GM12878 (cell line): ENCODE measurements at regions of chr9 and their contacts with region 1.

Region 1: GRCh38 chr9:95127249-95128176 is 190.0 kb downstream of the FANCC start:
- DNase-seq: no peak
- ATAC-seq: peak; percentile 97
- H3K4me3 ChIP-seq: no peak overlapping the region
- H3K27ac ChIP-seq: no peak overlapping the region
- H3K4me1 ChIP-seq: no peaks in the 10 kb centered on the region
- H3K27me3 ChIP-seq: no peaks in the 10 kb centered on the region
- CTCF ChIP-seq: peak; percentile 91 to 99 (median 96)
- EP300 ChIP-seq: no peak
- POLR2A ChIP-seq: no peak
- RAD21 ChIP-seq: peak; percentile 86

Region 2: DNA sequence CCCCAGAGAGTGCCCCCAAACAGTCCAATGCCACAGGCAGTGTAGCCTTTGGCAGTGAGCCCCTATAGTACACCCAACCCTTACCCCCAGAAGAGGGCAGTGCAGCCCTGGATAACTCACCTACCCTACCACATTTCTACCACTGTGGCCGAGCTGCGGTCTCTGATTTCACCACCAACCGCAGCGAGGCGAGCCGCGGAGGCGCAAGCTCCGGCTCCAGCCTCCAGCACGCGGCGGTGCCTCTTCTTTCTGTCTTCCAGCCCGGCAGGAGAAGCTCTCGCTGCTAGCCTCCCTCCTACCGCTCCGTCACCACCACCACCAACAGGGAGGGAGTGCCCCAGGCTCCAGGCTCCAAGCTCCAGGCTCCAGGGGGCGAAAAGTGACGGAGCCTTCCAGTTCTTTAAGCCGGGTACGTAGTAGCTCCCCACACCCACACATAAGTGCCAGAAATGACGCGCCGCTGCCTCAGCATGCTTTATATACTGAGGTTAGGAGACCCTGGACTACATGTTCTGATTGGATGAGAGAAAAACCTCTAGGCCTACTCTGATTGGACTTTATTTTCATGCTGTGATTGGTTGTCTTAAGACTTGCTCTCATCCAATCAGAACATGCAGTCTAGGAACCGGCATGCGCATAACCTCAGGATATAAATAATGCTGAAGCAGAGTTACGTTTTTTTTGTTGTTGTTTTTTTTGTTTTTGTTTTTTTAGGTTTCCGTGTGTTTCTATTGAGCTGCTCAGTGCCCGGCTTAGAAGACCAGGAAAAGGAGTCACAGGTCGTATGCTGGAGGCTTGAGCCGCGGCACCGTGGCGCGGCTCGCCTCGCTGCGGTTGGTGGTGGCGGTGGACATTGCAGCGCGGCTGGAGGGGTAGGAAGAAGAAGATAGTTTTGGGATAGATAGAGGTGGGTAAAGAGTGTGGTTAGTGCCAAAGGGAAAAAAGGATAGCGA is 572.8 kb before region 1 on chr9 and contains the start of gene PCAT7:
- CTCF ChIA-PET with region 1: no interaction called
- POLR2A ChIA-PET with region 1: no interaction called
- RAD21 ChIA-PET with region 1: interaction called, 3 read pairs
- SMC1A ChIA-PET with region 1: no interaction called
- in situ Hi-C with region 1: no loop called
- intact Hi-C with region 1: loop called (anchors 10 kb)
- DNase-seq: peak; percentile 12
- ATAC-seq: peak; percentile 100
- H3K4me3 ChIP-seq: no peak within 1 kb of the TSS
- H3K27ac ChIP-seq: no peak within 1 kb of the TSS
- H3K4me1 ChIP-seq: no peaks in the 10 kb centered on the region
- H3K27me3 ChIP-seq: no peaks in the 10 kb centered on the region; a peak in 1 of 4 replicates
- CTCF ChIP-seq: peak; percentile 28 to 54 (median 52); a peak in 4 of 6 replicates
- EP300 ChIP-seq: no peak
- POLR2A ChIP-seq: no peak
- RAD21 ChIP-seq: peak; percentile 44; the same call in 1 of the 2 replicates
- polyA plus RNA-seq, gene PCAT7: 0.04 TPM in 1 of 2 experiments, not detected in the other

Region 3: GRCh38 chr9:94675008-94675881 is 452.3 kb before region 1 on chr9:
- CTCF ChIA-PET with region 1: interaction called, 355 read pairs
- POLR2A ChIA-PET with region 1: no interaction called
- RAD21 ChIA-PET with region 1: interaction called, 134 read pairs
- SMC1A ChIA-PET with region 1: interaction called, 143 read pairs
- in situ Hi-C with region 1: loop called (anchors 5 kb)
- intact Hi-C with region 1: no loop called
- DNase-seq: no peak
- ATAC-seq: no peak
- H3K4me3 ChIP-seq: no peak overlapping the region
- H3K27ac ChIP-seq: no peak overlapping the region
- H3K4me1 ChIP-seq: no peaks in the 10 kb centered on the region
- H3K27me3 ChIP-seq: no peaks in the 10 kb centered on the region
- CTCF ChIP-seq: no peak
- EP300 ChIP-seq: no peak
- POLR2A ChIP-seq: no peak
- RAD21 ChIP-seq: no peak

Region 4: DNA sequence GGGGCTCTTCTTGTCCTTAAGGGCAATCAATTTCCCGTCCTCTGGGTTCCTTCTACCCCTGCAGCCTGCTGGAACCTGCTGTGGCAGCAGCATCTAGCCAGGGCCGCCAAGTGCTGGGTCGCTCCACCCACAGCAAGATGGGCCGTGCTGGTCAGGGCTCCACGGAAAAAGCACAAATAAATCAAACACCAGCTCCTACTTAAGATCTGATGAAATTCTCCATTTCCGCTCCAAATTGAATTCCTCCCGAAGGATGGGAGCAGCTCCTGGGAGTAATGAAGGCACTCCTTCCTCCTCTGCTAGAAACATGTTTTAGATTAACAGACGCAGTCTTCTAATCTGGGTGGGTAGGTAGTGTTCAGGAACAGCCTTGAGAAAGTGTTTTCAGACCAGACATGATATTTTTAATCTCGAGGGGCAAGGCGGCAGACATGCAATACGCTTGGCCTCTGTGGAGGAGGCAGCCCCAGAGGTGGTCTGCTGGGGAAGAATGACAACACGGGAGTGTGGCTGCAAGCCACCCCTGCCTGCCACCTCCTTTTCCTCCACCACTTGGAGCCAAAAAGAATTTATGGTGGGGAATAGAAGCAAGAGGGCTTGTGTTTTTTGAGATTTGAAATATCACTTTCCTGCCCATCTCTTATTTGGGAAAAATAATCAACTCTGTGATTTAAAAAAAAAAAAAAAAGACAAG is 207.0 kb before region 1 on chr9:
- CTCF ChIA-PET with region 1: interaction called, 8 read pairs
- POLR2A ChIA-PET with region 1: no interaction called
- RAD21 ChIA-PET with region 1: interaction called, 6 read pairs
- SMC1A ChIA-PET with region 1: interaction called, 10 read pairs
- in situ Hi-C with region 1: no loop called
- intact Hi-C with region 1: no loop called
- DNase-seq: no peak
- ATAC-seq: no peak
- H3K4me3 ChIP-seq: no peak overlapping the region
- H3K27ac ChIP-seq: no peak overlapping the region
- H3K4me1 ChIP-seq: no peaks in the 10 kb centered on the region
- H3K27me3 ChIP-seq: no peaks in the 10 kb centered on the region
- CTCF ChIP-seq: no peak
- EP300 ChIP-seq: no peak
- POLR2A ChIP-seq: no peak
- RAD21 ChIP-seq: no peak

Region 5: GRCh38 chr9:95157481-95158151 is 30.1 kb after region 1 on chr9:
- CTCF ChIA-PET with region 1: interaction called, 10 read pairs
- POLR2A ChIA-PET with region 1: interaction called, 3 read pairs
- RAD21 ChIA-PET with region 1: interaction called, 3 read pairs
- SMC1A ChIA-PET with region 1: interaction called, 4 read pairs
- in situ Hi-C with region 1: no loop called
- intact Hi-C with region 1: no loop called
- DNase-seq: peak; percentile 40
- ATAC-seq: peak; percentile 99
- H3K4me3 ChIP-seq: no peak overlapping the region; the same call in 1 of the 2 replicates
- H3K27ac ChIP-seq: no peak overlapping the region
- H3K4me1 ChIP-seq: peaks cover 8% of the 10 kb centered on the region
- H3K27me3 ChIP-seq: no peaks in the 10 kb centered on the region
- CTCF ChIP-seq: no peak
- EP300 ChIP-seq: peak; percentile 28 to 48; a peak in 2 of 4 replicates
- POLR2A ChIP-seq: no peak
- RAD21 ChIP-seq: no peak

Region 6: GRCh38 chr9:95268681-95269080 is 141.2 kb after region 1 on chr9:
- CTCF ChIA-PET with region 1: interaction called, 63 read pairs
- POLR2A ChIA-PET with region 1: no interaction called
- RAD21 ChIA-PET with region 1: interaction called, 7 read pairs
- SMC1A ChIA-PET with region 1: interaction called, 10 read pairs
- in situ Hi-C with region 1: no loop called
- intact Hi-C with region 1: no loop called
- DNase-seq: no peak
- ATAC-seq: peak; percentile 68
- H3K4me3 ChIP-seq: no peak overlapping the region
- H3K27ac ChIP-seq: no peak overlapping the region
- H3K4me1 ChIP-seq: peaks cover 18% of the 10 kb centered on the region
- H3K27me3 ChIP-seq: no peaks in the 10 kb centered on the region
- CTCF ChIP-seq: peak; percentile 31 to 56 (median 36); a peak in 4 of 6 replicates
- EP300 ChIP-seq: no peak
- POLR2A ChIP-seq: no peak
- RAD21 ChIP-seq: peak; percentile 76